Endothelial cell of umbilical vein (primary cell): ENCODE measurements at regions of chr11 and their contacts with region 1.

Region 1: DNA sequence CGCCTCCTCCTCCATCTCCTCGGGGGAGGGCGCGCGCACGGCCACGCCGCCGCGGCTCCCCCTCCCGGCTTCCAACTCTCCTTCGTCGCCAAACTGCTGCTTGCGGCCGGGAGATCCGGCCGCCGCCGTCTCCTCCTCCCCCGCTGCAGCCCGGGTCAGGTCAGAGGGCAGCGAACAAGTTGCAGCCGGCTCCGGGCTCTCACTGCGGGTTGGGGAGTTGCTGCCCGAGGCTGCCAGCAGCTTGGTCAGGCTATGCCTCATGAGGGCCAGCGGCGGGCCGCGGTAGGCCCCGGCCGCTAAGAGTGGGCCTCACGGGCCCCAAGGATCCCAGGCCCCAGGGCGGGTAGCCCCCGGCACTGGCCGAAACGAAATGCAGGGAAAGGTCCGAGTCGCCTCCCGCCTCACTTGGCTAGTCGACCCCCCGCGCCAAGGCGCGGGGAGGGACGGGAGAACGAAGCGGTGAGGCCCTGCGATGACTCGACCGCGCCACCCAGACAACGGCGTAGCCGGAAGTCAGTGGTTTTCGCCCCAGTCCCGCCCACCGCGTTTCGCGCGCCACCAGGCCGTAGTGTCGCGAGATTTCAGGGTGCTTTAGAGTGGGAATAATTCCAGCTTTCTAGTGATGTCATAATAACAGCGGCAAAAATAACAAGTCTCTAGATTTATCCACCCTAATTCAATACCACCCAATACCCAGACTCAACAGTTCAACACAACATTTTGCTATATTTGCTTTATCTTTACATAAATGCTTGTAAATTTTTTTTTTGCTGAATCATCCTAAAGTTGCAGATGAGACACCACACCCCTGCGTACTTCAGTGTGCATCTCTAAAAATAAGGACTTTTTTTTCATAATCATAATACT is at the start of gene CREBZF:
- DNase-seq: peak; percentile 94
- H3K4me3 ChIP-seq: peak within 1 kb of the TSS; percentile 40 to 92 (median 66)
- H3K27ac ChIP-seq: peak within 1 kb of the TSS; percentile 91
- H3K4me1 ChIP-seq: peaks cover 27% of the 10 kb centered on the region
- H3K27me3 ChIP-seq: no peaks in the 10 kb centered on the region
- CTCF ChIP-seq: no peak
- POLR2A ChIP-seq: peak; percentile 90
- total RNA-seq, gene CREBZF: 33.7 and 35.5 TPM in 2 replicates

Region 2: GRCh38 chr11:85517272-85517671 is 147.6 kb before region 1 on chr11:
- CTCF ChIA-PET with region 1: no interaction called
- POLR2A ChIA-PET with region 1: no interaction called
- dilution Hi-C with region 1: no loop called
- intact Hi-C with region 1: no loop called
- DNase-seq: no peak
- H3K4me3 ChIP-seq: no peak overlapping the region
- H3K27ac ChIP-seq: no peak overlapping the region
- H3K4me1 ChIP-seq: no peaks in the 10 kb centered on the region
- H3K27me3 ChIP-seq: no peaks in the 10 kb centered on the region
- CTCF ChIP-seq: no peak
- POLR2A ChIP-seq: no peak

Region 3: GRCh38 chr11:85595285-85595884 is 69.5 kb before region 1 on chr11:
- CTCF ChIA-PET with region 1: no interaction called
- POLR2A ChIA-PET with region 1: no interaction called
- dilution Hi-C with region 1: no loop called
- intact Hi-C with region 1: loop called (anchors 1 kb)
- DNase-seq: peak; percentile 50
- H3K4me3 ChIP-seq: no peak overlapping the region
- H3K27ac ChIP-seq: no peak overlapping the region
- H3K4me1 ChIP-seq: no peaks in the 10 kb centered on the region
- H3K27me3 ChIP-seq: no peaks in the 10 kb centered on the region
- CTCF ChIP-seq: peak; percentile 19 to 30
- POLR2A ChIP-seq: no peak

Region 4: GRCh38 chr11:85627998-85628770 is 36.7 kb before region 1 on chr11 and contains the start of gene TMEM126B:
- CTCF ChIA-PET with region 1: interaction called, 3 read pairs
- POLR2A ChIA-PET with region 1: no interaction called
- dilution Hi-C with region 1: no loop called
- intact Hi-C with region 1: loop called (anchors 1 kb)
- DNase-seq: peak; percentile 98
- H3K4me3 ChIP-seq: peak within 1 kb of the TSS; percentile 73 to 99 (median 91)
- H3K27ac ChIP-seq: peak within 1 kb of the TSS; percentile 68
- H3K4me1 ChIP-seq: peaks cover 16% of the 10 kb centered on the region
- H3K27me3 ChIP-seq: peaks cover 2 to 6% of the 10 kb centered on the region in 2 experiments
- CTCF ChIP-seq: no peak
- POLR2A ChIP-seq: peak; percentile 96
- total RNA-seq, gene TMEM126B: 49.4 and 51.2 TPM in 2 replicates

Region 5: DNA sequence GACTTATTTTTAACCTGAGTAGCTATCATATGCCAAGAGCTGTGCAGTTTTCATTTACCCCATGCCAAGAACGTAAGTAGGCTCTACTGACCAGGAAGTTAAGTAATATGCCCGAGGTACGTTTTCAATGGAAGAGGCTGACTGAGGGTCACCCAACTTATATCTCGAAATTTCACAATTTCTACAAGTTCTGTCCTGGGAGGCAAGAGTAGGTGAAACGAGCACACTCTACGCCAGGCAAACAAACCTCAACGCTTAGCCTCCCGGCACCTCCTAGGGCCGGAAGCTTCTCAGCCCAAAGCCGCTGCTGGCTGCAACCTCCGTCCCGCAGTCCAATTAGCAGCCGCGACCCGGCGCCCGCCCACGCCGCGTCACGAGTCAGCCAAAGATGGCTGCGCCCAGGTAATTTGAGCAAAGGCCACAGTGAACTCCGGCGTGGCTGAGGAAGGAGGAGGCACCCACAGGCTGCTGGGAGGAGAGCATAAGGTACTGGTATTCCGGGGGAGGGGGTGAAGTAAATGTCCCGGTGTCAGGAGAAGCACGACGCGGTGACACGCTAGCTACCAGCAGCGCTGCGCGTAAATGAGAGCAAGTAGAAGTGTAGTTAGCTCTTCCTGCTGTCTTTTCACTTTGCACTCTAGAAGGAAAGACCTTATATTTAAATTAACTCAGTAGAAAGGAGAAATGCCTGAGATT is 17.1 kb before region 1 on chr11 and contains the start of gene TMEM126A:
- CTCF ChIA-PET with region 1: interaction called, 5 read pairs
- POLR2A ChIA-PET with region 1: interaction called, 9 read pairs
- dilution Hi-C with region 1: no loop called
- intact Hi-C with region 1: loop called (anchors 2 kb)
- DNase-seq: peak; percentile 87
- H3K4me3 ChIP-seq: peak within 1 kb of the TSS; percentile 68 to 96 (median 79)
- H3K27ac ChIP-seq: peak within 1 kb of the TSS; percentile 63
- H3K4me1 ChIP-seq: peaks cover 11% of the 10 kb centered on the region
- H3K27me3 ChIP-seq: peaks cover 7 to 20% of the 10 kb centered on the region in 2 experiments
- CTCF ChIP-seq: no peak
- POLR2A ChIP-seq: peak; percentile 93
- total RNA-seq, gene TMEM126A: 35.3 and 40.8 TPM in 2 replicates

Region 6: GRCh38 chr11:85682330-85683305 is 17.8 kb after region 1 on chr11:
- CTCF ChIA-PET with region 1: interaction called, 4 read pairs
- POLR2A ChIA-PET with region 1: no interaction called
- dilution Hi-C with region 1: no loop called
- intact Hi-C with region 1: loop called (anchors 1 kb)
- DNase-seq: peak; percentile 57
- H3K4me3 ChIP-seq: peak overlapping the region; percentile 46 to 68 (median 66)
- H3K27ac ChIP-seq: peak overlapping the region; percentile 15
- H3K4me1 ChIP-seq: peaks cover 4% of the 10 kb centered on the region
- H3K27me3 ChIP-seq: peaks cover 9 to 25% of the 10 kb centered on the region in 2 experiments
- CTCF ChIP-seq: no peak
- POLR2A ChIP-seq: peak; percentile 44

Region 7: DNA sequence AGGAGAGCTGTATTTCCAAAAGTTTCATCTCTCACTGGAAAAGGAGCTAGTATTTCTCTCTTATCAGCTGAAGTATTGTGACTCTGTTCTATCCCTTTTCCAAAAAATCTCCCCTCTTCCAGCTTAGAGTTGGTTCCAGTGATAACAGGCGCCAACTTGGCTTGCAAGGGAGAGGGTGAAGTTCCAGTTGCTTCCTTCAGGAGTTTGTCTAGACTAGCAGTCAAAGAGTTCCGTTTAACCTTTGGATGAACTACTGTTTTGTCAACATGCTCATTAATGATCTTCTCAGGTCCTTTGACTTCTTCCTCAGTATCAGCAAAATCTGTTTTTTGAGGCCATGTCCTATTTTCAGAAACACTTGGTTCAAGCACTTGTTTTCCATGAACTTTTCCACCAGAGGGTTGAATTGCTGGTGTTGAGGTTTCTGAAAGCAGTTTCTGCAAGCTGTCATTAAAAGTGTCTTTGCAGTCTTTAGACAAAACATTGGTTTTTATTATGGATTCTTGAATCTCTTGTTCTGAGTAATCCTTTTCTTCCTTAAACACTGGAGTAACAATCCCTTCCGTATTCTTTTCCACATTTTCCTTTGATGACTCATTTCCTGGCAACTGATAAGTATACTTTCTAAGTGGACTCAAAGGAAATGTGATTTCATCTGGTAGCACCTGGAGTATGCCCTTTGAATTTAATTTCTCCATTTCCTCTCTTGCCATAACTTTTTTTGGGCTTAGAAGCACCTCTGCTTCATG is 60.8 kb after region 1 on chr11:
- CTCF ChIA-PET with region 1: no interaction called
- POLR2A ChIA-PET with region 1: no interaction called
- dilution Hi-C with region 1: no loop called
- intact Hi-C with region 1: loop called (anchors 1 kb)
- DNase-seq: peak; percentile 92
- H3K4me3 ChIP-seq: peak overlapping the region in 1 of 3 experiments; percentile 25
- H3K27ac ChIP-seq: peak overlapping the region; percentile 86
- H3K4me1 ChIP-seq: peaks cover 26% of the 10 kb centered on the region
- H3K27me3 ChIP-seq: no peaks in the 10 kb centered on the region
- CTCF ChIP-seq: no peak
- POLR2A ChIP-seq: no peak

Region 8: DNA sequence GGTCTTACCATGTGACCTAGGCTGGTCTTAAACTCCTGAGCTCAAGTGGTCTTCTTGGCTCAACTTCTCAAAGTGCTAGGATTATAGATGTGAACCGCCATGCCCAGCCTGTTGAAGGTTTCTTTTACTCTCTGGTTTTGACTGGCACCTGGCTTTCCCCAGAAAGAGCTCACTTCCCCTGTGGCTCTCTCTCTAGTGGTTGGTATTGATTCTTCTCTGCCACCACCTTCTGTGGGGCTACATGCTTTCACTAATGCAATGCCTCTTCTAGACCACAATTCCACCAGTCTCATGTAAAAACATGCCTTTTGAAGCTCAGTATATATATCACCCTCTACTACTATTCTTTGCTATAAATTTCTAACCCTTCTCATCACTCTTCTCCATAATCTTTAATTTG is 257.5 kb after region 1 on chr11:
- CTCF ChIA-PET with region 1: no interaction called
- POLR2A ChIA-PET with region 1: no interaction called
- dilution Hi-C with region 1: no loop called
- intact Hi-C with region 1: no loop called
- DNase-seq: no peak
- H3K4me3 ChIP-seq: no peak overlapping the region
- H3K27ac ChIP-seq: no peak overlapping the region
- H3K4me1 ChIP-seq: no peaks in the 10 kb centered on the region
- H3K27me3 ChIP-seq: peaks cover 22 to 23% of the 10 kb centered on the region in 2 experiments
- CTCF ChIP-seq: no peak
- POLR2A ChIP-seq: no peak

Region 9: DNA sequence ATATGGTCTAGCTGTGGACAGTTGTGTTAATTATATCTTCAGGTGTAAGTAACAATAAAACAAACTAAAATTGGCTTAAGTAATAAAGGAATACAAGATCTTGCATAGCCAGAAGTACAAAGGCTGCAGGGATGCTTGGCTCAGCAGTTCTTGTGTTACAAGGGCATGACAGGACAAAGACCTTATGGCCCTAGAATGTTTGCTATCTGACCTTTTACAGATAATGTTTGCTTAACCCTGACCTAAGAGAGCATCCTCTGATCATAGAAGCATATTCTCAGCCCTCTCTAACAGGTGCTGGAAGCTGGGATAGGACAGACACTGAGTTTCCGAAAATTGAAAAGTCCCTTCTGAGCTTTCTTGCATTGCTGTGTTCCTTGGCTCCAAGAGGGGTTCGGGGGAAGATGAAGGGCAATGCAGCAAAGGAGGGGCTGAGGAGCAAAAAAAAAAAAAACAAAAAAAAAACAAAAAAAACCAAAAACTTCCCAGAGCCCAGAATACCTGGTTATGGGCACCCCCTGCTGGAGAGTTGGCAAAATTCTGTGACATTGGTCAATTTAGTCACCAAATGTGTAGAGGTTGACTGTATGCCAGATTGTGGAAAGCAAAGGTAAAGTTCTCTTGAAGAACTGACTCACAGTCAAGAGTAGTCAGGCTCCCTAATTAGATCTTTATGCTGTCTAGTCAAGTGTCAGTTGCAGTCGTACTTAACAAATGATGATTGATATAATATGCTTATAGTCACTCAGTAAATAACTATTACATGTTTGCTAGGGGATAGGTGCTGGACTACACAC is 626.8 kb after region 1 on chr11:
- CTCF ChIA-PET with region 1: no interaction called
- POLR2A ChIA-PET with region 1: no interaction called
- dilution Hi-C with region 1: no loop called
- intact Hi-C with region 1: loop called (anchors 10 kb)
- DNase-seq: peak; percentile 49
- H3K4me3 ChIP-seq: no peak overlapping the region
- H3K27ac ChIP-seq: no peak overlapping the region
- H3K4me1 ChIP-seq: no peaks in the 10 kb centered on the region
- H3K27me3 ChIP-seq: peaks cover 0 to 3% of the 10 kb centered on the region in 2 experiments
- CTCF ChIP-seq: peak; percentile 59 to 68
- POLR2A ChIP-seq: no peak